ENCODE measurements at regions of chr1 and their contacts with region 1.

Region 1: GRCh38 chr1:94061513-94062443 is 59.2 kb downstream of the ABCA4 start:
- H3K4me3 ChIP-seq: no peak overlapping the region
- H3K27ac ChIP-seq: no peak overlapping the region
- H3K4me1 ChIP-seq: no peaks in the 10 kb centered on the region
- CTCF ChIP-seq: peak; percentile 88

Region 2: DNA sequence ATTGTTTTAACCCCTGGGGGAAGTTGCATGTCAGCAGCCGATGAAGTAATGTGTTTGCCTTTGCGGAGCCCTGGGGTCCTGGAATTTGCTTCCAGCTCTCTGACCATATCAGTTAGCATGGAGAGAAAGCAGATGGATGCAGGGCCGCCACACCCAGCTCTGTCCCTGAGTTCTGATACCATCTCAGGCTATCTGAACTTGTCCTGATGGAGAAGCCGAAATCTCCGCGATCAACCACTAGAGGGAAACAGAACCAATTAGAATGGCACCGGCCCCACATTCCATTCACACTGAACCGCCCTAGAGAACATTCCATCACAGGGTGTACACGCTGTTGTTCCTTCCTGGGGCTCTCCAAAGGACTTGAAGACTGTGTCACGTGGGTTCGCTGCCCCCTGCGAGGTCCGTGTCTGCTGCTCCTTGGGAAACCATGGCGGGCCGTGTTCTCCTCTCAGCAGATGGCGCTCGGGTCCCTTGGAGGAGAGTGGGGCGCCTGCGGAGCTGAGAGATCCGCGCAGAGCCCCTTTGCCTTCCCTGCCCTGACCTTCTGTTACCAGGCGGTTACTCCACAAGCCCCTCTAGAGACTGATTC is 16.2 kb before region 1 on chr1:
- CTCF ChIA-PET with region 1: interaction called, 172 read pairs
- POLR2A ChIA-PET with region 1: no interaction called
- H3K4me3 ChIP-seq: no peak overlapping the region
- H3K27ac ChIP-seq: no peak overlapping the region
- H3K4me1 ChIP-seq: no peaks in the 10 kb centered on the region
- CTCF ChIP-seq: peak; percentile 75

Region 3: GRCh38 chr1:94247138-94248094 is 185.6 kb after region 1 on chr1:
- CTCF ChIA-PET with region 1: interaction called, 22 read pairs
- POLR2A ChIA-PET with region 1: interaction called, 3 read pairs
- H3K4me3 ChIP-seq: peak overlapping the region; percentile 76
- H3K27ac ChIP-seq: peak overlapping the region; percentile 64; the same call in 1 of the 2 replicates
- H3K4me1 ChIP-seq: no peaks in the 10 kb centered on the region
- CTCF ChIP-seq: no peak